PC-3 (cell line): ENCODE measurements at regions of chr13 and their contacts with region 1.

Region 1: DNA sequence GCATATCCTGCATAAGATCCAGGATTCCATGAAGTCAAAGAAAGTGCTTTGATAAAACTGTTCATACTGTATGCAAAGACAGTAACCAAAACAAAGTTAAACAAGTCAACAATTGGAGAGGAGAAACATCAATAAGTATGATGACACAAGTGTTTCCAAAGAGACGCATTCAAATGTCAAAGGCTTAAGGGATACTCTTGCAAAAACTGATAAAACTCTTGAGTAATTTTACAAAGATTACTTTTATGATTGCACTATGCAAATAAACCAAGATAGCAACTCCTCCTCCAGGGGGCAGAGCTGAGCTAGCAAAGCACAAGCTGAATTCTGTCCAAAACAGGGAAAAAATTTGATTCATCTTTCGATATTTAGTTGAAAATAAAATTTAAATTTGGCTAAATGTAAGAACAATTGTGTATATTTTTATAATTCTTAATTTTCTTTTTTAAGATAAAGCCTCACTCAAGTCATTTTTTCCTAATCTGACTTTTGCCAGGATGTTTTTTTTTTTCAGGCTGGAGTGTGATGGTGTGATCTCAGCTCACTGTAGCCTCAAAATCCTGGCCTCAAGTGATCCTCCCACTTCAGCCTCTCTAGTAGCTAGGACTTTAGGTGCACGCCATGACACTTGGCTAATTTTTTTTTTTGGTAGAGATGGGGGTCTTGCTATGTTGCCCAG is 84.0 kb downstream of the MZT1 start:
- DNase-seq: peak; percentile 61
- ATAC-seq: peak; percentile 60
- H3K4me3 ChIP-seq: no peak overlapping the region
- H3K27ac ChIP-seq: no peak overlapping the region
- H3K4me1 ChIP-seq: no peaks in the 10 kb centered on the region
- H3K27me3 ChIP-seq: peaks cover 8% of the 10 kb centered on the region; the same call in 1 of the 2 replicates
- CTCF ChIP-seq: peak; percentile 69

Region 2: GRCh38 chr13:72403396-72404010 is 239.9 kb before region 1 on chr13:
- CTCF ChIA-PET with region 1: no interaction called
- POLR2A ChIA-PET with region 1: interaction called, 22 read pairs
- intact Hi-C with region 1: no loop called
- DNase-seq: no peak
- ATAC-seq: no peak
- H3K4me3 ChIP-seq: no peak overlapping the region
- H3K27ac ChIP-seq: no peak overlapping the region
- H3K4me1 ChIP-seq: no peaks in the 10 kb centered on the region
- H3K27me3 ChIP-seq: no peaks in the 10 kb centered on the region
- CTCF ChIP-seq: no peak

Region 3: GRCh38 chr13:72552731-72553130 is 90.7 kb before region 1 on chr13:
- CTCF ChIA-PET with region 1: no interaction called
- POLR2A ChIA-PET with region 1: no interaction called
- intact Hi-C with region 1: no loop called
- DNase-seq: no peak
- ATAC-seq: no peak
- H3K4me3 ChIP-seq: no peak overlapping the region
- H3K27ac ChIP-seq: no peak overlapping the region
- H3K4me1 ChIP-seq: no peaks in the 10 kb centered on the region
- H3K27me3 ChIP-seq: no peaks in the 10 kb centered on the region
- CTCF ChIP-seq: no peak

Region 4: GRCh38 chr13:72696579-72696978 is 53.1 kb after region 1 on chr13:
- CTCF ChIA-PET with region 1: no interaction called
- POLR2A ChIA-PET with region 1: no interaction called
- intact Hi-C with region 1: loop called (anchors 1 kb)
- DNase-seq: peak; percentile 46
- ATAC-seq: no peak
- H3K4me3 ChIP-seq: no peak overlapping the region
- H3K27ac ChIP-seq: no peak overlapping the region
- H3K4me1 ChIP-seq: no peaks in the 10 kb centered on the region
- H3K27me3 ChIP-seq: no peaks in the 10 kb centered on the region
- CTCF ChIP-seq: peak; percentile 59

Region 5: DNA sequence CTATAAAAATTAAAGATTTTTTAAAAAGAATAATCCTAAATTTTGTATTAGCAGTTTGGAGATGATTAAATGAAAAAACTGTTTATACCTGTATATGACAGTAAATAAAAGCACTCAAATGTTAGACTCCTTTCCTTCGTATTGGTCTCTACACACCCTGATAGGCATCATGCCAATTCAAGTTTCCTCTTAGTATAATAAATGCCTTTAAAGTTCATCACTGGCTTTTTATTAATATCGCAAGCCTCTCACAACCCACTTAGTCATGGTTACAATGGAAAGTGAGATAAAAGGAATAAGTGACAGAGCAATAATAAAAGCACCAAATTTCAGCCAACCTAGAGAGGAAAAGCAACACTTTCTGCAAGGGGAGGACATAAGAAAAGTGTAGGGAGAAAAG is 240.7 kb after region 1 on chr13:
- CTCF ChIA-PET with region 1: no interaction called
- POLR2A ChIA-PET with region 1: no interaction called
- intact Hi-C with region 1: no loop called
- DNase-seq: no peak
- ATAC-seq: no peak
- H3K4me3 ChIP-seq: no peak overlapping the region
- H3K27ac ChIP-seq: no peak overlapping the region
- H3K4me1 ChIP-seq: no peaks in the 10 kb centered on the region
- H3K27me3 ChIP-seq: no peaks in the 10 kb centered on the region
- CTCF ChIP-seq: no peak